ENCODE measurements at regions of chr11 and their contacts with region 1.

Region 1: DNA sequence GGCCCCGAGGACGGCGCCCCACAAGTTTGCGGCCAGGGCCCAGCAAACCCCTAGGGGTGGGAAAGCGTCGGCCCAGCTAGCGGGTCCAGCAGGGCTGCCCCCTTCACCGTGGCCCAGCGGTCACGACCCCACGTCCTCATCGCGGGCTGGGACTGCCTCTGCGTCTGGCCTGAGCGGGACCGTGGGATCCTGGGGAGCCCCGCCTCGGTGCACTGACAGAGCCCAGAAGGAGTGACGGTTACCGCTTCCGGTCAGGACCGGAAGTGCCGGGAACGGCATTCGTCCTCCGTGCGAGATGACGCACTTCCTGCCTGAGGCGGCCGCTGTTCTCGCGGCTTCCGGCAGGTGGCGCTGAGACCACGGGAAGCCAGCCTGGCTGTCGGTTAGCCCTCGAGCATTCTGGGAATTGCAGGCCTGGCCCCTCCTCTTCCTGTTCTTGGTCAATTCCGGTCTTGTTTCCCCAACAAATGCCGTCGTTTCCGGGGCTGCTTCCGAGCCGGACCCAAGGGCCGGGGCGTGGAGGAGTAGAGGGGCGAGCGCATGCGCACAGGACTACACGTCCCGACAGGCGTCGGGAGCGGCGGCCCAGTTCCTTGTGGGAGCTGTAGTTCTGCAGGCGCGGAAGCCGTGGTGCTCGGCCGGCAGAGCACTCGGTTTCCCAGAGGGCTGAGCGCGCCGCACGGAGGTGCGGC is at the start of gene TSSC4:
- DNase-seq: peak; percentile 99
- H3K4me3 Mint-ChIP-seq: peak within 1 kb of the TSS; percentile 92
- H3K27ac Mint-ChIP-seq: peak within 1 kb of the TSS; percentile 84
- H3K4me1 Mint-ChIP-seq: no peaks in the 10 kb centered on the region
- H3K27me3 Mint-ChIP-seq: no peaks in the 10 kb centered on the region
- total RNA-seq, gene TSSC4: 70.8 and 76.4 TPM in 2 replicates

Region 2: DNA sequence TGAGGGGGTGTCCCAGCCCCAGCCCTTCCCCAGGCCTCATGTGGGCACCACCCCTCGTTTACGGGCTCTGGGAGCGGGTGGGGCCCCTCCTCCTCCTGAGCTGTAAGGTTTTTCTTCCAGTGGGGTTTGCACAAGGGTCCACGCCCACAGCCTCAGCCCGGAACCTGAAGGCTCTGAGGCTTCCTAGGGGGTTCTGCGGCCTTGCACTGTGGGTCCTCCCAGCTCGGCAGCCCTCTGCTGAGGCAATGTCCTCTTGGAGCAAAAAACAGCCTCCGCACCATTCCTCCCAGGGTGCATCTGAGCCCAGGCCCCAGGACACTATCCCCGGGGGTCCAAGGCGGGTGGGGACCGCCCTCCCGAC is 416.6 kb before region 1 on chr11:
- intact Hi-C with region 1: no loop called
- DNase-seq: no peak
- H3K4me3 Mint-ChIP-seq: no peak overlapping the region
- H3K27ac Mint-ChIP-seq: no peak overlapping the region
- H3K4me1 Mint-ChIP-seq: no peaks in the 10 kb centered on the region
- H3K27me3 Mint-ChIP-seq: no peaks in the 10 kb centered on the region

Region 3: GRCh38 chr11:2196970-2197770 is 203.0 kb before region 1 on chr11:
- intact Hi-C with region 1: loop called (anchors 1 kb)
- DNase-seq: peak; percentile 55
- H3K4me3 Mint-ChIP-seq: no peak overlapping the region
- H3K27ac Mint-ChIP-seq: peak overlapping the region; percentile 6
- H3K4me1 Mint-ChIP-seq: no peaks in the 10 kb centered on the region
- H3K27me3 Mint-ChIP-seq: peaks cover 4% of the 10 kb centered on the region

Region 4: GRCh38 chr11:2305140-2305840 is 94.9 kb before region 1 on chr11:
- intact Hi-C with region 1: loop called (anchors 1 kb)
- DNase-seq: peak; percentile 69
- H3K4me3 Mint-ChIP-seq: no peak overlapping the region
- H3K27ac Mint-ChIP-seq: peak overlapping the region; percentile 86
- H3K4me1 Mint-ChIP-seq: peaks cover 33% of the 10 kb centered on the region
- H3K27me3 Mint-ChIP-seq: no peaks in the 10 kb centered on the region

Region 5: GRCh38 chr11:2342981-2343380 is 57.2 kb before region 1 on chr11:
- intact Hi-C with region 1: no loop called
- DNase-seq: no peak
- H3K4me3 Mint-ChIP-seq: no peak overlapping the region
- H3K27ac Mint-ChIP-seq: no peak overlapping the region
- H3K4me1 Mint-ChIP-seq: no peaks in the 10 kb centered on the region
- H3K27me3 Mint-ChIP-seq: peaks cover 2% of the 10 kb centered on the region

Region 6: GRCh38 chr11:2420502-2421225 is 20.4 kb after region 1 on chr11:
- intact Hi-C with region 1: loop called (anchors 1 kb)
- DNase-seq: peak; percentile 56
- H3K4me3 Mint-ChIP-seq: no peak overlapping the region
- H3K27ac Mint-ChIP-seq: no peak overlapping the region
- H3K4me1 Mint-ChIP-seq: no peaks in the 10 kb centered on the region
- H3K27me3 Mint-ChIP-seq: no peaks in the 10 kb centered on the region

Region 7: DNA sequence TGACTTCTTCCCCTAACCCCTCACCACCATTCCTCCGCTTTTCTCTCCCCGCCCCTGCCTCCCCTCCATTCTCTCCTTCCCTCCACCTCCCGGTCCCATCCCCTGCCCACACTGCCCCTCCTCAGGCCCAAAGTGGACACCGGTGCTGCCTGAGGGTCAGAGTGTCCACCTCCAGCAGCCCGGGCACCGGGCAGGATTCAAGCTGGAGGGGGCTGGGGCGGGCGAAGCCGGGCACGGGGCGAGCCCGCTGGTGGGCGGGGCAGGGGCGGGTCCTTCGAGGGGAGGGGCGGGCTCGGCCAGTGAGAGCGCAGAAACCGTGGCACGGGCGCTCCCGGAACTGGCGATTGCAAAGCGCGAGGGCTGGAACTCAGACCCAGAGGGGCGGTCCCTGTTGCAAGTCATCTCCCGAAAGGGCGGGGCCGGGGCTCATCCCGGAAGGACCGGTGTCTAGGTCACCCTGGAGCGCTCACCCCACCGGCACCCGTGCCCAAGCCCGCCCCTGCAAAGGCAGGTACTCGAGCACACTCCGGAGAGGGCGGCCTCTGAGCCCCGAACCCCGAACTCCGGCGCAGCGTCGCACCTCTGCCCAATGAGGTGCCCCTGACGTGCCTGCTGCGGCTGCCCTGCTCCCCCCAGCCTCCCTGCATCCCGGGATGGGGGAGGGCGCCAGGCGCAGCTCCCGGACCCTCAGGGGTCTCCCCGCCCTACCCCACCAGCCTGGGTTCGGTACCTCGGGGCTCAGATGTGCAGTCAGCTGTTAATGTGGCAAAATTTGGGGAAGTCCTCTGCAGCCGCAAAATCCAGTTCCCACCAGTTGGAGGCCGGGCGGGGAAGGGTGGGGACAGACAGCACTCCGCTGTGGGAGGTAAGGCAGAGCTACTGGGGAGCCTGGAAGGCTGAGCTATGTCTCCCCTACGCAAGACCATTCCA is 501.9 kb after region 1 on chr11:
- intact Hi-C with region 1: loop called (anchors 1 kb)
- DNase-seq: peak; percentile 93
- H3K4me3 Mint-ChIP-seq: peak overlapping the region; percentile 72
- H3K27ac Mint-ChIP-seq: no peak overlapping the region
- H3K4me1 Mint-ChIP-seq: peaks cover 41% of the 10 kb centered on the region
- H3K27me3 Mint-ChIP-seq: no peaks in the 10 kb centered on the region